ENCODE measurements at regions of chr9 and their contacts with region 1.

Region 1: GRCh38 chr9:111298731-111299598 is 31.1 kb downstream of the OR2K2 start:
- DNase-seq: no peak
- ATAC-seq: peak; percentile 92

Region 2: GRCh38 chr9:110638381-110638954 is 660.5 kb before region 1 on chr9:
- intact Hi-C with region 1: loop called (anchors 1 kb)
- DNase-seq: no peak
- ATAC-seq: no peak

Region 3: GRCh38 chr9:111037381-111038305 is 261.3 kb before region 1 on chr9:
- intact Hi-C with region 1: loop called (anchors 5 kb)
- DNase-seq: peak; percentile 70
- ATAC-seq: peak; percentile 20

Region 4: GRCh38 chr9:111253742-111254437 is 45.1 kb before region 1 on chr9:
- intact Hi-C with region 1: no loop called
- DNase-seq: no peak
- ATAC-seq: no peak

Region 5: GRCh38 chr9:111501648-111502047 is 202.7 kb after region 1 on chr9:
- intact Hi-C with region 1: no loop called
- DNase-seq: no peak
- ATAC-seq: no peak

Measured in Right ventricle myocardium inferior (tissue), 1 donor.